ENCODE measurements at regions of chr9 and their contacts with region 1.

Region 1: GRCh38 chr9:87464110-87464965 is 33.3 kb upstream of the DAPK1 start:
- DNase-seq: no peak
- H3K4me3 Mint-ChIP-seq: no peak overlapping the region
- H3K27ac Mint-ChIP-seq: peak overlapping the region; percentile 55
- H3K4me1 Mint-ChIP-seq: peaks cover 12% of the 10 kb centered on the region
- H3K27me3 Mint-ChIP-seq: peaks cover 2% of the 10 kb centered on the region

Region 2: GRCh38 chr9:87375397-87376073 is 88.8 kb before region 1 on chr9:
- intact Hi-C with region 1: loop called (anchors 1 kb)
- DNase-seq: no peak
- H3K4me3 Mint-ChIP-seq: no peak overlapping the region
- H3K27ac Mint-ChIP-seq: no peak overlapping the region
- H3K4me1 Mint-ChIP-seq: peaks cover 9% of the 10 kb centered on the region
- H3K27me3 Mint-ChIP-seq: peaks cover 3% of the 10 kb centered on the region

Region 3: DNA sequence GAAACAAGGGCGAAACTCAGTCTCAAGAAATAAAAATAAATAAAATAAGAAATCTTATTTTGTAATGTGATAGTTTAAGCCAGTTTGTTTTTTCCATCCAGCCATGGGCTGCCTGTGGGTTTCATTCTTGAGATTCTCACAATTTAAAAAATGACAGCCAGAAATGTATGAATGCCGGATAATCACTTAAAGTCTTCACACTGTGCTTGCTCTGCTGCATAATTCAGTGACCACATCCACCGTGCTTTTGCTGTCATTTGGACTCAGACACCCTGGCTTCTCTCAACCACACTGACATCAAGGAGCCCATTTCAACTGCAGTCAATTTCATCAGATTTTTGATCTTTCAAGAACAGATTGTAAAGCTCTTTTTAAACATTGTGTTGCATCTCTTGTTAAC is 27.6 kb before region 1 on chr9:
- intact Hi-C with region 1: no loop called
- DNase-seq: no peak
- H3K4me3 Mint-ChIP-seq: no peak overlapping the region
- H3K27ac Mint-ChIP-seq: no peak overlapping the region
- H3K4me1 Mint-ChIP-seq: no peaks in the 10 kb centered on the region
- H3K27me3 Mint-ChIP-seq: no peaks in the 10 kb centered on the region

Region 4: GRCh38 chr9:87475463-87475862 is 11.1 kb after region 1 on chr9:
- intact Hi-C with region 1: loop called (anchors 1 kb)
- DNase-seq: no peak
- H3K4me3 Mint-ChIP-seq: no peak overlapping the region
- H3K27ac Mint-ChIP-seq: no peak overlapping the region
- H3K4me1 Mint-ChIP-seq: no peaks in the 10 kb centered on the region
- H3K27me3 Mint-ChIP-seq: no peaks in the 10 kb centered on the region

Region 5: GRCh38 chr9:87497604-87498045 is 33.3 kb after region 1 on chr9 and contains the start of gene DAPK1:
- intact Hi-C with region 1: loop called (anchors 5 kb)
- DNase-seq: no peak
- H3K4me3 Mint-ChIP-seq: no peak within 1 kb of the TSS
- H3K27ac Mint-ChIP-seq: no peak within 1 kb of the TSS
- H3K4me1 Mint-ChIP-seq: peaks cover 10% of the 10 kb centered on the region
- H3K27me3 Mint-ChIP-seq: peaks cover 51% of the 10 kb centered on the region
- total RNA-seq, gene DAPK1: 2.0 and 2.8 TPM in 2 replicates

Region 6: GRCh38 chr9:87535817-87536539 is 71.6 kb after region 1 on chr9:
- intact Hi-C with region 1: loop called (anchors 1 kb)
- DNase-seq: peak; percentile 1
- H3K4me3 Mint-ChIP-seq: no peak overlapping the region
- H3K27ac Mint-ChIP-seq: peak overlapping the region; percentile 88
- H3K4me1 Mint-ChIP-seq: peaks cover 6% of the 10 kb centered on the region
- H3K27me3 Mint-ChIP-seq: no peaks in the 10 kb centered on the region

Region 7: DNA sequence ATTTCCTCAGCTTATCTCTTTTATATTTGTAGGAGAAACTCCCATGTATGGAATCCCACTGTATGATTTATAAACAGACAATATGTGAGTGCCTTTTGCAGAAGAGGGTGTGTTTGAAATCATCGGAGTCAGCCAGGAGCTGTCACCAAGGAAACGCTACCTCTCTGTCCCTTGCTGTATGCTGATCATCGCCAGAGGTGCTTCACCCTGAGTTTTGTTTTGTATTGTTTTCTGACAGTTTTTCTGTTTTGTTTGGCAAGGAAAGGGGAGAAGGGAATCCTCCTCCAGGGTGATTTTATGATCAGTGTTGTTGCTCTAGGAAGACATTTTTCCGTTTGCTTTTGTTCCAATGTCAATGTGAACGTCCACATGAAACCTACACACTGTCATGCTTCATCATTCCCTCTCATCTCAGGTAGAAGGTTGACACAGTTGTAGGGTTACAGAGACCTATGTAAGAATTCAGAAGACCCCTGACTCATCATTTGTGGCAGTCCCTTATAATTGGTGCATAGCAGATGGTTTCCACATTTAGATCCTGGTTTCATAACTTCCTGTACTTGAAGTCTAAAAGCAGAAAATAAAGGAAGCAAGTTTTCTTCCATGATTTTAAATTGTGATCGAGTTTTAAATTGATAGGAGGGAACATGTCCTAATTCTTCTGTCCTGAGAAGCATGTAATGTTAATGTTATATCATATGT is 243.6 kb after region 1 on chr9:
- intact Hi-C with region 1: loop called (anchors 2 kb)
- DNase-seq: no peak
- H3K4me3 Mint-ChIP-seq: no peak overlapping the region
- H3K27ac Mint-ChIP-seq: no peak overlapping the region
- H3K4me1 Mint-ChIP-seq: peaks cover 30% of the 10 kb centered on the region
- H3K27me3 Mint-ChIP-seq: peaks cover 33% of the 10 kb centered on the region

Measured in activated T-helper 1 cell treated with anti-CD3 and anti-CD28 coated beads, Interleukin-12 subunit alpha, Interleukin-12 subunit beta, Interleukin-2, Interleukin-4 antibody, amounts not matched to agents 30 ng/mL and 10 ng/mL and 1 ng/mL, durations not matched to agents 14 hours and 24 hours and 36 hours (primary cell).